ENCODE measurements at regions of chr5 and their contacts with region 1.

Region 1: DNA sequence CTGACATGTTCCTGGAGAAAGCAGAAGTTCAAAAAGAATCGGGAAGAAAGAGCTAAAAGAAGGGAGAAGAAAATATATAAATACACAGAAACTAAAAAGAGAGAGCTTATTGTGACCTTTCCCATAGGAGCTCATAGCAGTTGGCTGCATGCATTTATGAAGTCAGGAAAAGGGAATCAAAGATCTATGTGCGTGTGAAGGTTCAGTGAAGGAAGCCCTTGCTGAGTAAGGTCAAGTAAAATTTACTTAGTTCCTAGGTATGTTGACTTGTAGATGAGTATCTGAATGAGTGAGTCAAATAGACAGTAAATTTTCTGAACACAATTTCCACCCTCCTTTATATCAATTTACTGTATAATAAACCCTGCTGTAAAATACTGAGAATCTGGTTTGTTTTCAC is 632.5 kb downstream of the SLCO4C1 start:
- H3K4me3 ChIP-seq: no peak overlapping the region
- H3K27ac ChIP-seq: no peak overlapping the region
- H3K4me1 ChIP-seq: no peaks in the 10 kb centered on the region
- CTCF ChIP-seq: no peak

Region 2: DNA sequence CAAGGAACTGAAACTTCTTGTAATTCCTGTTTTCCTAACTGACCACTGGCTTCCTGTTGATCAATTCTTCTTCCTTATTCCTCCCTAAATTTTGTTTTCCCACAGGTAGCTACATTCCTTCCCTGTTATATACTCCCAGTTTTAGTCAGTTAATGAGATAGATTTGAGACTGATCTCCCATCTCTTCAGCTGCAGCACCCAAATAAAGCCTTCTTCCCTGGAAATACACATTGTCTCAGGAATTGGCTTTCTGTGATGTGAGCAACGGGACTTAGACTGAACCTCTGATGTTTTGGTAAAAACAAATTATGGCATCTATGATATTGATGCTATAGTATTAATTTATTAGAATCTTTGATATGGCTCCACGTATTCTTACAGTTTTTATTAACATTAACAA is 143.1 kb before region 1 on chr5:
- CTCF ChIA-PET with region 1: no interaction called
- POLR2A ChIA-PET with region 1: no interaction called
- H3K4me3 ChIP-seq: no peak overlapping the region
- H3K27ac ChIP-seq: no peak overlapping the region
- H3K4me1 ChIP-seq: no peaks in the 10 kb centered on the region
- CTCF ChIP-seq: no peak

Region 3: GRCh38 chr5:101678481-101679193 is 15.1 kb after region 1 on chr5:
- CTCF ChIA-PET with region 1: interaction called, 12 read pairs
- POLR2A ChIA-PET with region 1: no interaction called
- H3K4me3 ChIP-seq: no peak overlapping the region
- H3K27ac ChIP-seq: no peak overlapping the region
- H3K4me1 ChIP-seq: no peaks in the 10 kb centered on the region
- CTCF ChIP-seq: peak; percentile 72